Activated B cell treated with CpG ODN at 0.5 μM for 24 hours (primary cell): ENCODE measurements at regions of chr1 and their contacts with region 1.

Region 1: DNA sequence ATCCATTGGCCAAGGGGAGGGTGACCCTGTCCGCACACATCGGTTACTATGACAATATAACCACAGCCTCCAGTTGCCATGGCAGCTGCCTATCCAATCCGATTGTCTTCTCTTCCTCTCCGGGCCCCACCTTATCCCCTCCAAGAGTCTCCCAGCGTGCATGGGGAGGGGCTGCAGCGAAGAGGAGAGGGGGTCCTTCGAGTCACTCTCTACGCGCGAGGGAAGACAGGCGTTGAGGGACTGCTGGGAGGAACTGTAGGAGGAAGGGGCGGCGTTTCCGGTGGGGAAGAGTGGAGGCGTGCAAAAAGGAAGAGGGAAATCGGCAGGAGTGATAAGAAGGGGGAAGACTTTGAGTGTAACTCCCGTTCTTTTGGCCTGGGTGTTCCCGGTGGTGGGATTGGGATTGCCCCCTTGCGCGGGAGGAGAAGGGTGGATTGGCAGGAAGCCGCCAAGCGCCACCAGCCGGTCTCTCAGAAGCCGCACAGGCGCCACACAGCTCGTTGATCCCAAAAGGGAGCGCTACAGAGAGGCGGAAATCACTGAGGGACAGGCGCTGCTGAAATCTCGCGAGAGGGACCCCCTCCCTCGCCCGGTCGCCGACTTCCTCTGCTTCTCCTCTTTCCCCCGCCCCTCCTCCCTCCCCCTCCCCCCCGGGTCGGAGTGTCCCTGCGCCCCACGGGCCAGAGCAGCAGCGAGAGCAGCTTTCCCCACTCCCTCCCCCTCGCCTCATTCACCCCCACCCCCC is 384 bp upstream of the SMG7 start:
- DNase-seq: peak; percentile 89
- ATAC-seq: peak; percentile 68
- H3K4me3 Mint-ChIP-seq: peak overlapping the region; percentile 97
- H3K27ac Mint-ChIP-seq: peak overlapping the region; percentile 100
- H3K4me1 Mint-ChIP-seq: peaks cover 36% of the 10 kb centered on the region
- H3K27me3 Mint-ChIP-seq: no peaks in the 10 kb centered on the region
- CTCF ChIP-seq: no peak

Region 2: DNA sequence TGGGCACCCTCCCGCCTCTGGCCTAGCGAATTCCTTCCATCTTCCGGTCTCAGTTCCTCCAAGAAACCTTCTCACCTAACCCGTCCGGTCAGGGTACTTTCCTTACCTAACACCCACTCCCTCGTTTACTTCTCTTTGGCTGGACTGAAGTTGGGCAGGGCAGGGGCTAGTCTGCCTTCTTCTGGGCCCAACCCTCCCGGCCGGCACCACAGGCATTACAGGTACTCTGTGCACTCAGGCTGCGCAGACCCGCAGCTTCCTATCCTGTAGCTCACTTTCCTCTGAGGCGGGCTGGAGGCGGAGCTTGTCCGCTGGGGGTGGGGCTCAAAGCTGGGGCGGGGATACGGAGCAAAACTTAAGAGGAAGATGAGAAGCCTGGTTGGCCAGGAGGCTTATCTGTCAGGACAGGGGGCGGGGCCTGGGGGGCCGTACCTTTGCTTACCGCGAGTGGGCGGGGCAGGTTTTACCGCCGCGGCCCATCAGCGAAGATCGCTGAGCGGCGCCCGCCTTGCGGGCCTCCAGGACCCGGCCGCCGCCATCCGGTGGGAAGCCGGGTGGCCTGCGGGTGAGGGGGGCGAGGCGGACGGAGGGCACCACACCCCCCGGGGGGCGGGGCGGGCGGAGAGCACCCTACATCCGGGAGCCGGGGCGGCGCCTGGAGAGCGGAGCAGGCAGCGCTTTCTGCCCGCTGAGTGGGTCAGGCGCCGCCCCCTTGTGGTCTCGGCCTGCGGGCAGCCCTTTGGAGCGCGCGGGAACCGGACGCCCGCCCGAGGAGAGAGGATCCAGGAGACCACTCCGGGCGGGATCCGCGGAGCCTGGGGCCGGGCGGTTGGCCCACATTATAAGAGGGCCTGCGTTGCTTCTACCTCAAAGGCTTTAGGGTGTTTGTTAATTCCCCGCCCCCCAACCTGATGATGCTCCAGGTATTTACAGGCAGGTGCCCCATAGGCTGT is 1442.3 kb before region 1 on chr1:
- CTCF ChIA-PET with region 1: no interaction called
- POLR2A ChIA-PET with region 1: no interaction called
- intact Hi-C with region 1: loop called (anchors 2 kb)
- DNase-seq: peak; percentile 98
- ATAC-seq: peak; percentile 94
- H3K4me3 Mint-ChIP-seq: peak overlapping the region; percentile 97
- H3K27ac Mint-ChIP-seq: peak overlapping the region; percentile 97
- H3K4me1 Mint-ChIP-seq: peaks cover 15% of the 10 kb centered on the region
- H3K27me3 Mint-ChIP-seq: no peaks in the 10 kb centered on the region
- CTCF ChIP-seq: no peak

Region 3: GRCh38 chr1:183023601-183024316 is 448.2 kb before region 1 on chr1:
- CTCF ChIA-PET with region 1: no interaction called
- POLR2A ChIA-PET with region 1: no interaction called
- intact Hi-C with region 1: loop called (anchors 1 kb)
- DNase-seq: peak; percentile 67
- ATAC-seq: peak; percentile 65
- H3K4me3 Mint-ChIP-seq: peak overlapping the region; percentile 94
- H3K27ac Mint-ChIP-seq: peak overlapping the region; percentile 86
- H3K4me1 Mint-ChIP-seq: peaks cover 48% of the 10 kb centered on the region
- H3K27me3 Mint-ChIP-seq: no peaks in the 10 kb centered on the region
- CTCF ChIP-seq: no peak

Region 4: GRCh38 chr1:183432548-183432875 is 39.4 kb before region 1 on chr1:
- CTCF ChIA-PET with region 1: no interaction called
- POLR2A ChIA-PET with region 1: no interaction called
- intact Hi-C with region 1: no loop called
- DNase-seq: no peak
- ATAC-seq: no peak
- H3K4me3 Mint-ChIP-seq: no peak overlapping the region
- H3K27ac Mint-ChIP-seq: no peak overlapping the region
- H3K4me1 Mint-ChIP-seq: no peaks in the 10 kb centered on the region
- H3K27me3 Mint-ChIP-seq: peaks cover 31% of the 10 kb centered on the region
- CTCF ChIP-seq: no peak

Region 5: DNA sequence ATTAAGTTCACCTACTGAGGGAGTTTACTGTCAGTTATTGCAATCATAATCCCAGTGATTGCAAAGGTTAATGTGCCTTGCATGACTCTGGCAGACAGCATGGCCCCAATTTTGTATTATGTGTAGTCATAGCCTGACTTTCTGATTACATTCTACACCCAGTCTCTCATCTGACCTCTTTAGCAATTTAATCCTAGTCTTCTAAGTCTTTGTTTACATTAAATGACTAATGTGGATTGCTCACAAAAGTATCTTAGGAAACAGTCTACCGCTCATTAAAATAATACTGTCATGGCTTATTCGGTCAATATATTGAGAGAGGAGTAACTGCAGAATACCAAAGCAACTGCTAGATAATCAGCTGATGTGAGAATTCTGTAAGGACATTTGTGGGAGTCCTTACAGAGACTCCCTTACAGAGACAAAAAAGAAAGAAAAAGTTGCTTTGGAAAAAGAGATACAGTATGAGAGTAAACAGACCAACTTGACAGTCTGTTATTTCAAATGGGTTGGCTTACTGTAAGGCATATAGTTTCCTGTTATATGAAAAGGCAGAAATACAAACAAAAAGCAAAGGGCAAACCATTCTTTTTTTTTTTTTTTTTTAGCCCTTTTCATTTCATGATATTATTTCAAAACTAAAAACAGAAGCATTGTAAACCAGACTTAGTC is 43.2 kb after region 1 on chr1:
- CTCF ChIA-PET with region 1: no interaction called
- POLR2A ChIA-PET with region 1: interaction called, 3 read pairs
- intact Hi-C with region 1: loop called (anchors 2 kb)
- DNase-seq: no peak
- ATAC-seq: no peak
- H3K4me3 Mint-ChIP-seq: no peak overlapping the region
- H3K27ac Mint-ChIP-seq: no peak overlapping the region
- H3K4me1 Mint-ChIP-seq: peaks cover 8% of the 10 kb centered on the region
- H3K27me3 Mint-ChIP-seq: no peaks in the 10 kb centered on the region
- CTCF ChIP-seq: no peak

Region 6: DNA sequence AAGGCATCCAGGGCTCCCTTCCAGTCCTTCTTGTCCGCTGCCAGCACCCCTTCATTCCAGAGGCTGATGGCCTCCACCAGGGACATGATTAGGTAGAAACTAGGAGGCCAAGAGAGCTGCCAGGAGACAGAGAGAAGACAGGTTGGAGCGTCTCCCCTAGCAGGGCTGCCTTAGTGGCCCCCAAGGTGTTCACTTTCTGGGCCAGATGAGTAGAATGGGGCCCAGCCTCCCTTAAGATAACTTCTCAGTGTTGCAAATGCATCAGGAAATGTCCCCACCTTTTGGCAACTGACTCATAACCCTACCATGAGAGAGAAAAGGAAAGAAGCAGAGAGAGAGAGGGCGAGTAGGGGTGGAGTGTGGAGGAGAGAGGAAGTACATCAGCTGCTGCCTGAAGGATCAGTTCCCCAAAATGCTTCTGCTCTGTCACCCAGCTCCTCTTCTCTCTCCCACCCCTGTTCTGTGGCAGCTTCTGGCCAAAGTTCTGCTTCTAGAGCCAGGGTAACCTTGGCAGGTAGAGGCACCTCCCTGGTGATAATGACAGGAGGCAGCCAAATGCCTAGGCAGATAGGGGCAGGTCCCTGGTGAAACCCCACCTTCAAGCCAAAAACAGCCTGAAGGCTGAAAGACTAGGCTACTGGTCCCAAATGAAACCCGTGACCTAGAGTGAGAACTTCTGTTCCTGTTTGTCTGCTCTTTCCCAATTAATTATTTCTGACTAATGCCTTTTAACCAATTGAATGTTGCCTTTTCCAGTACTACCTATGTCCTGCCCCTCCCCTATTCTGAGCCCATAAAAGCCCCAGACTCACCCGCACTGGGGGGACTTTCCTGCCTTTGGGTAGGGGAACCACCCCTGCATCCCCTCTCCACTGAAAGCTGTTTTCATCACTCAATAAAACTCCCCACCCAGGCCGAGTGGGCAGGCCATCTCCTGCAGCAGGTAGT is 118.6 kb after region 1 on chr1 and contains the start of gene NCF2:
- CTCF ChIA-PET with region 1: no interaction called
- POLR2A ChIA-PET with region 1: interaction called, 48 read pairs
- intact Hi-C with region 1: loop called (anchors 1 kb)
- DNase-seq: peak; percentile 55
- ATAC-seq: peak; percentile 78
- H3K4me3 Mint-ChIP-seq: peak within 1 kb of the TSS; percentile 88
- H3K27ac Mint-ChIP-seq: peak within 1 kb of the TSS; percentile 92
- H3K4me1 Mint-ChIP-seq: peaks cover 73% of the 10 kb centered on the region
- H3K27me3 Mint-ChIP-seq: no peaks in the 10 kb centered on the region
- CTCF ChIP-seq: no peak
- total RNA-seq, gene NCF2: 101 TPM in 2 replicates

Region 7: GRCh38 chr1:183685112-183685713 is 213.3 kb after region 1 on chr1:
- CTCF ChIA-PET with region 1: no interaction called
- POLR2A ChIA-PET with region 1: no interaction called
- intact Hi-C with region 1: loop called (anchors 5 kb)
- DNase-seq: no peak
- ATAC-seq: peak; percentile 61
- H3K4me3 Mint-ChIP-seq: no peak overlapping the region
- H3K27ac Mint-ChIP-seq: no peak overlapping the region
- H3K4me1 Mint-ChIP-seq: peaks cover 8% of the 10 kb centered on the region
- H3K27me3 Mint-ChIP-seq: peaks cover 25% of the 10 kb centered on the region
- CTCF ChIP-seq: no peak

Region 8: DNA sequence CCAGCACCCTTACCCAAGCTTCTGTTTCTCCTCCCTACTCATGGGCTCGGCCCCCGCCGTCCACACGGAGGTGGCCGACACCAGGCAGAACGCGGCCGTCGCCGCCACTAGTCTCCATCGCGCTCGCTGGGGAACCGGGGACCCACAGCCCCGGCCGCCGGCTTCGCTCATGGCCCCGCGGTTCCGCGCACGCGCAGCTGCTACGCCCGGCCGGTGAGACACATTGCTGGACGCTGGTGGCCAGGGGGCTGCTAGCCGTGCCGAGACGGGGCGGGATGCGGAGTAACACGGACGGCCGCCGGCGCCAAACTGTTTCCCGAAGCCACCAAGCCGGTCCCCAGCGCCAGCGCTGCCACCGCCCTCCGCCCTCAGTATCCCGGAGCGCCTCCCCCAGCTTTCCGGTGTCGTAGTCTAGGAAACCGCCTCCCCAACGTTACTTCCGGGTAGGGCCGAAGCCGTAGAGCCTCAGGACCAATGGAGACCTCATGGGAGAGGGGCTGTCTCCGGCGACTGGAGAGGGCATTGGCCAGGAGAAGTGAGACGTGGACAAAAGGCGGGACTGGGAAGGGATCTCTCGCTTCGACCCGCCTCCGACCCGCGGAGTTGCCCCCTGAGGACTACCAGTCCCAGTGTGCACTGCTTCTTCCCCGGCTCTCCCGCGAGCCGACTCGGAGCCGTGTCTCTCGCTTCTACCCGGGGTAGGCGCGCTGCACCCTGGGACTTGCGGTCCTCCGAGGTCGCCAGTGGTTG is 1282.7 kb after region 1 on chr1 and contains the start of gene EDEM3:
- CTCF ChIA-PET with region 1: no interaction called
- POLR2A ChIA-PET with region 1: no interaction called
- intact Hi-C with region 1: loop called (anchors 1 kb)
- DNase-seq: peak; percentile 90
- ATAC-seq: peak; percentile 95
- H3K4me3 Mint-ChIP-seq: peak within 1 kb of the TSS; percentile 95
- H3K27ac Mint-ChIP-seq: peak within 1 kb of the TSS; percentile 86
- H3K4me1 Mint-ChIP-seq: peaks cover 23% of the 10 kb centered on the region
- H3K27me3 Mint-ChIP-seq: peaks cover under 1% of the 10 kb centered on the region
- CTCF ChIP-seq: no peak
- total RNA-seq, gene EDEM3: 11.5 and 16.2 TPM in 2 replicates